PC-9 (cell line): ENCODE measurements at regions of chr6 and their contacts with region 1.

Region 1: GRCh38 chr6:41779793-41780545 is at the start of gene FRS3:
- DNase-seq: peak; percentile 79 to 97
- H3K4me3 ChIP-seq: peak within 1 kb of the TSS; percentile 94
- H3K27ac ChIP-seq: peak within 1 kb of the TSS; percentile 43; the same call in 1 of the 2 replicates
- H3K4me1 ChIP-seq: peaks cover 34% of the 10 kb centered on the region
- H3K27me3 ChIP-seq: no peaks in the 10 kb centered on the region
- CTCF ChIP-seq: peak; percentile 88
- total RNA-seq, gene FRS3: 4.5 and 10.4 TPM in 2 replicates

Region 2: DNA sequence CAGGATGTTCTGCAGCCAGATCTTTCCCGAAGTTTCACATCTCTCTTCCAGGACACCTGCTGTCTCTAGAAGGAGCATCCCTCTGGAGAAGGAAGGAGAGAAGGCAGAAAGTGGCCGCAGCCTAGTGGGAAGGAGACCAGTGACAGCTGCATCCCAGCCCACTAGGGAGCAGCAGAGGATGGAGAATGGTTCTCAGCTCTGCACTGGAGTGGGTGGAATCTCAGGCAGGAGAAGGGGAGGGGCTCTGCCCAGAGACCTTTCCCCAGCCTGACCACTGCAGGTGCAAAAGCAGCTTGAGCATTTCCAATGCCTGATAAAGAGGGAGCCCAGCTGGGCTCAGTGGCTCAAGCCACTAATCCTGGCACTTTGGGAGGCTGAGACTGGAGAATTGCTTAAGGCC is 412.3 kb before region 1 on chr6:
- CTCF ChIA-PET with region 1: no interaction called
- POLR2A ChIA-PET with region 1: no interaction called
- intact Hi-C with region 1: loop called (anchors 1 kb)
- DNase-seq: peak; percentile 37 to 58
- H3K4me3 ChIP-seq: no peak overlapping the region
- H3K27ac ChIP-seq: no peak overlapping the region
- H3K4me1 ChIP-seq: 0 out of 2 replicates have a peak, but pooled peaks cover 5% of the 10 kb centered on the region
- H3K27me3 ChIP-seq: peaks cover 24% of the 10 kb centered on the region
- CTCF ChIP-seq: peak; percentile 76

Region 3: GRCh38 chr6:41683510-41684310 is 96.3 kb before region 1 on chr6:
- CTCF ChIA-PET with region 1: no interaction called
- POLR2A ChIA-PET with region 1: no interaction called
- intact Hi-C with region 1: loop called (anchors 1 kb)
- DNase-seq: peak in 1 of 2 experiments; percentile 72
- H3K4me3 ChIP-seq: peak overlapping the region; percentile 31; the same call in 1 of the 2 replicates
- H3K27ac ChIP-seq: no peak overlapping the region
- H3K4me1 ChIP-seq: peaks cover 14% of the 10 kb centered on the region; the same call in 1 of the 2 replicates
- H3K27me3 ChIP-seq: no peaks in the 10 kb centered on the region
- CTCF ChIP-seq: peak; percentile 86

Region 4: DNA sequence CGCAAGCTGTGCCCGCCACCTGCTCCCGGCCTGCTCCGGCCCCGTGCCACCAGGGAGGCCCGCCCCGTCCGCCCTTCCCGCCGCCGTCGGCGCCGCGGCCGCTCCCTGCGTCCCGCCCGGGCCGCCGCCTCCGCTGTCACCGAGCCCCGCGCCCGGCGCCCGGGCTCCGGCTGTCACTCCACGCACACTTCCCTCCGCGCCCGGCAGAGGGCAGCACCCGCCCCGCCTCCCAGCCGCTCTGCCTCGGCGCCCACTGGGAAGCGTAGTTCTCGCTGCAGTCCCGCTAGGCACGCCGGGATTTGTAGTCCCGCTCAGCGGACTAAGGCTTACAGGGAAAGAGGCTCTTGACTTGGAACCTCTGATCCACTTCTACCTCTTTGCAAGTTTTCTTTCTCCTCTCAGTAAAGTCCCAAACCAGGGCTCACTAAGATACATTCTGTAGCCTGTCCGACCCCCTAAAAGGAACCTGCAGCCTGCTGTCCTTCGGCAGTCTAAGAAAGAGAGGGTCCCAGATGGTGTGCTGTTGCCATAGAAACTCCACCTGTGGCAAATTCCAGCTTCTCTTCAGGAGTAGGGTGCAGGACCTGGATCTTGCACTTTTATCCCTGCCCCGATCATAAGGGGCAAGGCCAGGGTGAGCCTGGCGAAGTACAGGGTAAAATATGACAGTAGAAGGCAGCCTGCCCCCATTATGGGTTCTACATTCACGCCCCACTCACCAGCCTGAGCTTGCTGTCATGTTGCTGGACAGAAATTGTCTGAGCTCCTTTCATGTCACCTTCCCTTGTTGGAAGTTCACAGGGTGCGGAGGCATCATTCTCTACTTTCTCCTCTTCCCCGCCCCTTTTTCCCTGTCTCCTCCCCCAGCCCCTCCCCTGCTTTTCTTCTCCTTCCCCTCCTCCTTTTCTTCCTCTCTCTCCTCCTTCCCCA is 44.3 kb before region 1 on chr6 and contains the start of gene TFEB:
- CTCF ChIA-PET with region 1: interaction called, 21 read pairs
- POLR2A ChIA-PET with region 1: no interaction called
- intact Hi-C with region 1: loop called (anchors 1 kb)
- DNase-seq: peak; percentile 81 to 94
- H3K4me3 ChIP-seq: peak within 1 kb of the TSS; percentile 57
- H3K27ac ChIP-seq: no peak within 1 kb of the TSS
- H3K4me1 ChIP-seq: peaks cover 24% of the 10 kb centered on the region
- H3K27me3 ChIP-seq: no peaks in the 10 kb centered on the region
- CTCF ChIP-seq: peak; percentile 75
- total RNA-seq, gene TFEB: 7.3 and 8.6 TPM in 2 replicates

Region 5: DNA sequence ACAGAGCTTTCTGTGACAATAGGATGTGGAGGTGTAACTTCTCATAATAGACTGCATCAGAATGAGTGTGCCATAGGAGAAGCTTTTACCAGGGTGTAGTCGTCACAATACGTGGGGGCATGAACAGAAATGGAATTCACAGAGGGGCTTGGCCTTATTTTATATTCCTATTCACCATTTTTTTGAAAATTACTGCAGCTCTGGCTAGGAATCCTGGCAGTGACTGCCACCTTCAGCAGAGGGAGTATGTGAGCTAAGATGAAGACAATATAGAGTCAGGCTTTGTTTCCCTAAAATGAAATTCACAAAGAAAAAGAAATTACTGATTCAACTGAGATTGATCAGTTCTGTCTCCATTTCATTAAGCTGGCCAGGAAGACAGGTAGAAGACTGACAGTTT is 21.4 kb after region 1 on chr6:
- CTCF ChIA-PET with region 1: no interaction called
- POLR2A ChIA-PET with region 1: no interaction called
- intact Hi-C with region 1: no loop called
- DNase-seq: peak in 1 of 2 experiments; percentile 25
- H3K4me3 ChIP-seq: no peak overlapping the region
- H3K27ac ChIP-seq: no peak overlapping the region
- H3K4me1 ChIP-seq: no peaks in the 10 kb centered on the region
- H3K27me3 ChIP-seq: no peaks in the 10 kb centered on the region
- CTCF ChIP-seq: peak; percentile 72

Region 6: DNA sequence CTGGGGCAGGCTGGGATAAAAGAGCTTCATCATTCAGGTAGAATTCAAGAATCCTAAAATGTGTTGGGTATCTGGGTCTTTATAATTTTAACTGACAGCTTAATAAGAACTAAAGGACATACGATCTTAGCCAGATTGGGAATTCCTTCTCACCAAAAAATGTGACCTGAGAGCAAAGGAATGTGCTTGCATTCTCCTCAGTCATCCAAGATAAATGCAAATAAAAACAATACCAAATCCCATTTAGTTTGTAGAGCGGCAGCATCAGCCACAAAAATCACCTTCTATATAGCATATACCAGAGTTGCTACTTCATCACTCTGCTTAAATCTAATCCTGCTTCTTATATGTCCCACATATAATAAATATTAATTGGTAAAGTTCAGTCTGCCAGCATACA is 98.3 kb after region 1 on chr6:
- CTCF ChIA-PET with region 1: no interaction called
- POLR2A ChIA-PET with region 1: no interaction called
- intact Hi-C with region 1: no loop called
- DNase-seq: no peak
- H3K4me3 ChIP-seq: no peak overlapping the region
- H3K27ac ChIP-seq: no peak overlapping the region
- H3K4me1 ChIP-seq: no peaks in the 10 kb centered on the region
- H3K27me3 ChIP-seq: no peaks in the 10 kb centered on the region
- CTCF ChIP-seq: no peak

Region 7: DNA sequence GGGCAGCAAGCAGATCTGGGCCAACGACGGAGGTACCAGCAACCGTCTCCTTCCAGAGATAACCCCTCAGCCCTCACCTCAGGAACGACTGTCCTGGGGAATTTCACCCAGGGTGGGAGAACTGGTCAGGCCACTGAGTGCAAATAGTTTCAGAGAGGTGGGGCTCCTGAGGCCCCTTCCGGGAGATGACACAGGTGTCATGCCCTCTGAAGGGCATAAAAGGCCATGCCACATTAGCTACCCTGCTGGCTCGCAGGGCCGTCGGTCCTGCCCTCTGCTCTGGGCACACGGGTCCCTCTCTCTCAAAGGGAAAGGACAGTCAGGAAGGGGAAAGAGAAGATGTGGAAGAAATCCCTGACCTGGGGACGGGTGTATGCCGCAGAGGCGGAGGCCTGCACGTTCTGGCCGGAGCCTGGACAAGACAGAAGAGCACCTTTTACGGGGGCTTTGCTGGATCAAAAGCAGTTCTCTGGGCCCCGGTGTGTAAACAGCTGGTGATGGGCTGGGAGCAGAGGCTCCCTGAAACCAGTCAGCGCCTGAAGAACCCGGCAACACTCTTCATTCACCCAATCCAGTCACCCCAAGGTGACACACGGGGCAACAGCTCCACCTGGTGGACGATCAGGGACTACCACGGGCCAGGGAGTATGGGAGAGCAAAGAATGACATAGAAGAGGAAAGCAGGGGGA is 264.0 kb after region 1 on chr6:
- CTCF ChIA-PET with region 1: interaction called, 8 read pairs
- POLR2A ChIA-PET with region 1: interaction called, 10 read pairs
- intact Hi-C with region 1: loop called (anchors 1 kb)
- DNase-seq: peak; percentile 68 to 89
- H3K4me3 ChIP-seq: no peak overlapping the region
- H3K27ac ChIP-seq: no peak overlapping the region
- H3K4me1 ChIP-seq: peaks cover 41% of the 10 kb centered on the region
- H3K27me3 ChIP-seq: no peaks in the 10 kb centered on the region
- CTCF ChIP-seq: peak; percentile 96

Region 8: DNA sequence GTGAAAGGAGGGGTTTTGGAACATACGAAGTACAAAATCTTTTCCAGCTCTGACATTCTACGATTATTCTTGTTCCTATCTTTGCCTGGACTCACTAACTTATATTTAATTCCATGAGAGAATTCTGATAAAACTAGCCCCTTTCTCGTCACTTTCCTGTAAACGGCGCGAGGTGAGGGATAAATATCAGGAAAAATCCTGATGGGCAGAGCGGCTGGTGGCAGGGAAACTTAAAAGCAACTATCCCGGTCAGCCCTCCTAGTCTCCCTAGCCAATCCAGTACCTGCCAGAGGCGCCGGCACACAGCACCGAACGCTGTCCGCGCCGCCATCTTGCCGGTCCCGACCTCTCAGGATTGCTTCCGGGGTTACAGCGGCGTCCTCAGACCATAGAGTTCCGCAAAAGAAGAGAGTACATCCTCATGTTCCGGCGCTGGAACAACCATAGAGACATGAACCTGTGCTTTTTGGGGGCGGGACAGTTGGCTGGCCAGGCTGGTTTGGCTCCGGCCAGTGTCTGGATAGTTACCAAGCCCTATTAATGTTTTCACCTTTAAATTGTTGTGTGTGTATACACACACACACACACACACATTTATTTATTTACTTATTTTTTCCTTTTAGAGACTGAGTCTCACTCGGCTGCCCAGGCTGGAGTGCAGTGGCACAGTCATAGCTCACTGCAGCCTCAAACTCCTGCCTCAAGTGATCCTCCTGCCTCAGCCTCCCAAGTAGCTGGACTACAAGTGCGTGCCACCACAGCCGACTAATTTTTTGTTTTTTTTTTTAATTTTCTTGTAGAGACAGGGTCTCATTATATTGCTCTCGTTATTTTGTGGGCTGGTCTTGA is 437.8 kb after region 1 on chr6 and contains the start of gene MRPS10:
- CTCF ChIA-PET with region 1: interaction called, 3 read pairs
- POLR2A ChIA-PET with region 1: no interaction called
- intact Hi-C with region 1: loop called (anchors 2 kb)
- DNase-seq: peak; percentile 89 to 91
- H3K4me3 ChIP-seq: peak within 1 kb of the TSS; percentile 96
- H3K27ac ChIP-seq: peak within 1 kb of the TSS; percentile 76
- H3K4me1 ChIP-seq: peaks cover 59% of the 10 kb centered on the region
- H3K27me3 ChIP-seq: no peaks in the 10 kb centered on the region
- CTCF ChIP-seq: no peak
- total RNA-seq, gene MRPS10: 38.7 and 56.5 TPM in 2 replicates